WTC11 (cell line): ENCODE measurements at regions of chr3 and their contacts with region 1.

Region 1: DNA sequence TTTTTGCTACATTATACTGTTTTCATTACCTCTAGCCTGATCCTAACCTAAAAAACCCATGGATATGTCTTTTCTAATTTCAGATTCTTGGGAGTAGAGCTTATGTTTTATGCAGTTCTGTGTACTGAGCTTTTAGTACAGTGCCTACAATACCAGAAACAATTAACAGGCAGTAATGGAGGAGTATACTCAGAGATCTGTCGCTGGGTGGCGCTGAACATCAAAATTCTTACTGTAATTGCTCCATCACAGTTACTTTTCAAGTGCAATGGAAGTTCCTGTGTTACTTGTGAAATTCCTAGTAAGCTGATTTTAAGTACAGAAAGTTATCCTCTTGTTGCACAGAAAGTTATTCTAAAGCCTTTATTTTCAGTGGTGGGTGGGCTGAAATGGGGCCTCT is 66.9 kb downstream of the RNF13 start:
- DNase-seq: peak; percentile 63
- ATAC-seq: peak; percentile 90
- H3K4me3 Mint-ChIP-seq: no peak overlapping the region
- H3K27ac Mint-ChIP-seq: no peak overlapping the region
- H3K4me1 Mint-ChIP-seq: no peaks in the 10 kb centered on the region
- H3K27me3 Mint-ChIP-seq: no peaks in the 10 kb centered on the region
- CTCF ChIP-seq: peak; percentile 47; the same call in 1 of the 2 replicates

Region 2: GRCh38 chr3:149891621-149892020 is 11.7 kb after region 1 on chr3:
- CTCF ChIA-PET with region 1: interaction called, 12 read pairs
- POLR2A ChIA-PET with region 1: interaction called, 4 read pairs
- DNase-seq: no peak
- ATAC-seq: no peak
- H3K4me3 Mint-ChIP-seq: no peak overlapping the region
- H3K27ac Mint-ChIP-seq: no peak overlapping the region
- H3K4me1 Mint-ChIP-seq: peaks cover 4% of the 10 kb centered on the region; the same call in 1 of the 2 replicates
- H3K27me3 Mint-ChIP-seq: no peaks in the 10 kb centered on the region
- CTCF ChIP-seq: no peak

Region 3: GRCh38 chr3:149906036-149906435 is 26.2 kb after region 1 on chr3:
- CTCF ChIA-PET with region 1: interaction called, 13 read pairs
- POLR2A ChIA-PET with region 1: no interaction called
- DNase-seq: no peak
- ATAC-seq: no peak
- H3K4me3 Mint-ChIP-seq: no peak overlapping the region
- H3K27ac Mint-ChIP-seq: no peak overlapping the region
- H3K4me1 Mint-ChIP-seq: peaks cover 4% of the 10 kb centered on the region
- H3K27me3 Mint-ChIP-seq: no peaks in the 10 kb centered on the region
- CTCF ChIP-seq: no peak

Region 4: DNA sequence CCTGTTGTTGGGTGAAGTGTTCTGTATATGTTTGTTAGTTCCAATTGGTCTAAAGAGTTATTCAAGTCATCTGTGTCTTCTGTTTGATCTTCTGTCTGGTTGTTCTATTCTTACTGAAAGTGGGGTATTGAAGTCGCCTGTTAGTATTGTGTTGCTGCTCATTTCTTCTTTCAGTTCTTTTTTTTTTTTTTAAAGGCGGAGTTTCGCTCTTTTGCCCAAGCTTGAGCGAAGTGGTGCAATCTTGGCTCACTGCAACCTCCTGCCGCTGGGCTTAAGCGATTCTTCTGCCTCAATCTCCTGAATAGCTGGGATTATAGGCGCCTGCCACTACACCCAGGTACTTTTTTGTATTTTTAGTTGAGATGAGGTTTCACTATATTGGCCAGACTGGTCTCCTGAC is 67.4 kb after region 1 on chr3:
- CTCF ChIA-PET with region 1: no interaction called
- POLR2A ChIA-PET with region 1: no interaction called
- DNase-seq: no peak
- ATAC-seq: no peak
- H3K4me3 Mint-ChIP-seq: no peak overlapping the region
- H3K27ac Mint-ChIP-seq: no peak overlapping the region
- H3K4me1 Mint-ChIP-seq: no peaks in the 10 kb centered on the region
- H3K27me3 Mint-ChIP-seq: no peaks in the 10 kb centered on the region; the same call in 1 of the 2 replicates
- CTCF ChIP-seq: no peak

Region 5: DNA sequence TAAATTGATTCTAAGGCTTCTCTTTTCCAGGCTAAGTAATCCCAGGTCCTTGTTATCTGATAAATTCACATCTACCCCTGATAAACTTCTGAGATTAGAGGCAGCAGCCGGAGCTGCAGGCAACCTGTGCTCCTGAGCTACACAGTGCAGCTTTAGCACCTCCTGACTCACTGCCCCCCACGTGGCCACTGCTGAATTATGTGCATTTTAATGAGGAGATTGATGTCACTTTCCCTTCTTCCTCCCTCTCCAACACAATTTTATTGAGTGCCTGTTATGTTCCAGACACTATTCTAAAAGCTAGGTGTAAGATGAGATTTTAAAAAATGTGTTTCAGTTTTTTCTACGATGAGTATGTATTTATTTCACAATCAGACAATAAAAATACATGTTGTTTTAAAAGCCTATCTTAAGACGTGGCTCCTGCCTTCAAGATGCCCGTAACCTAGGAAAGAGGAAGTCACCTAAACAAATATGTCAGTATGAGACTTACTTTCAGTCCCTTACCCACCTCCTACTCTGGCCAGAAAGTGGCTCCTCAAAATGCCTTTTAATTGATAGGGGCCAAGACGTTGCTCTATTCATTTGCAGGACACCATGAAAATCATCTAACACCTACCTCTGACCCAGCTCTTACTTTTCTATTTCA is 252.4 kb after region 1 on chr3:
- CTCF ChIA-PET with region 1: no interaction called
- POLR2A ChIA-PET with region 1: no interaction called
- DNase-seq: no peak
- ATAC-seq: no peak
- H3K4me3 Mint-ChIP-seq: no peak overlapping the region
- H3K27ac Mint-ChIP-seq: no peak overlapping the region
- H3K4me1 Mint-ChIP-seq: peaks cover 42% of the 10 kb centered on the region
- H3K27me3 Mint-ChIP-seq: peaks cover 10% of the 10 kb centered on the region
- CTCF ChIP-seq: no peak